ENCODE measurements at regions of chr6 and their contacts with region 1.

Region 1: GRCh38 chr6:99613409-99613704 is 6.7 kb downstream of the PRDM13 start:
- DNase-seq: peak; percentile 72
- ATAC-seq: peak; percentile 64
- H3K4me3 ChIP-seq: peak overlapping the region in 4 of 5 experiments; percentile 23 to 68 (median 52)
- H3K4me3 Mint-ChIP-seq: peak overlapping the region; percentile 86
- H3K27ac ChIP-seq: no peak overlapping the region
- H3K27ac Mint-ChIP-seq: no peak overlapping the region
- H3K4me1 ChIP-seq: peaks cover 21 to 30% of the 10 kb centered on the region in 2 donors
- H3K4me1 Mint-ChIP-seq: peaks cover 9% of the 10 kb centered on the region
- H3K27me3 ChIP-seq: peaks cover 0 to 80% (median 73%) of the 10 kb centered on the region in 4 experiments
- H3K27me3 Mint-ChIP-seq: peaks cover 75% of the 10 kb centered on the region
- CTCF ChIP-seq: peak; percentile 50

Region 2: DNA sequence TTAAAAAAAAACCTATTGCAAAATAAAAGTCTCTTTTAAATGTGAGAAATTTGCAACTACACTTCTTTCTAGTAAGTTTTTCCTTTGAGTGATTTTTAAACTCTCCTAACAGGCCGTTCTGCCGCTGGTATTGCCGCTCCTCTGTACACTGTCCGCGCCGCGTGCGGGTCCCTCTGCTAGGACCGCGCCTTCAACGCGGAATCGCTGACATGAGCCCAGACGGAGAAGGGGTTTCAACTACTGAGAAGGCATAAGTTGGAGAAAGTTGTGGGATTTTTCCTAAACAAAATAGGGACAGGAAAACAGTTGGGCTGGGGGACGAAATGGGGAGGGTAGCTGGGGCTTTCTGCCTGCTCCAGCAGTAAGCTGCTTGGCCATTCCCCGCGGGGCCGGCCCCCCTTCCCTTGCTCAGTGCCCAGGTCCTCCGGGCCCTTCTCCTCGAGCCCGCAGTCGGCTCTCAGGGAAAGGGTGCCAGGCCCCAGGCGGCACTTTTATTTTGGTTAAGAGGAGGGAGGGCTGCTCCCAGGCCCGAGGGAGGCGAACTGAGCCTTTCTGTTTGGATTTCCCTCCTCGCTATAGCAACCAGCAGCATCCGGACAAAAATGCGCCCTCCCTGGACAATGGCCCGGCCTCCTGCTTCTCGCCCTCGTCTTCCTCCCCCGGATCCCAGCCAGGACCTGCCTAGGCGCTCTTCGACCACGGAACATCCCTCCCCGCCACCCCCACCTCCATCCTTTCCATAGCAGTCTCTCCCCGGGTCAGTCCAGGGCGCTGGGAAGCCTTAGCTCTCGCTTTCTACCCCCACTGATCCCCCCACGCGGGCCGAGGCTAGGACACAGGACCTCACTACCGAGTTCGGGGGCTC is 785.8 kb before region 1 on chr6:
- CTCF ChIA-PET with region 1: no interaction called
- POLR2A ChIA-PET with region 1: no interaction called
- intact Hi-C with region 1: loop called (anchors 5 kb)
- DNase-seq: peak; percentile 17
- ATAC-seq: no peak
- H3K4me3 ChIP-seq: no peak overlapping the region
- H3K4me3 Mint-ChIP-seq: no peak overlapping the region
- H3K27ac ChIP-seq: no peak overlapping the region
- H3K27ac Mint-ChIP-seq: no peak overlapping the region
- H3K4me1 ChIP-seq: peaks cover 30 to 55% of the 10 kb centered on the region in 2 donors
- H3K4me1 Mint-ChIP-seq: peaks cover 37% of the 10 kb centered on the region
- H3K27me3 ChIP-seq: peaks cover 5 to 91% (median 79%) of the 10 kb centered on the region in 4 experiments
- H3K27me3 Mint-ChIP-seq: peaks cover 73% of the 10 kb centered on the region
- CTCF ChIP-seq: no peak

Region 3: GRCh38 chr6:99520855-99521632 is 92.3 kb before region 1 on chr6:
- CTCF ChIA-PET with region 1: interaction called, 3 read pairs
- POLR2A ChIA-PET with region 1: no interaction called
- intact Hi-C with region 1: loop called (anchors 2 kb)
- DNase-seq: peak; percentile 79
- ATAC-seq: peak; percentile 86
- H3K4me3 ChIP-seq: peak overlapping the region; percentile 77 to 97 (median 79)
- H3K4me3 Mint-ChIP-seq: peak overlapping the region; percentile 99
- H3K27ac ChIP-seq: peak overlapping the region; percentile 54 to 62
- H3K27ac Mint-ChIP-seq: peak overlapping the region; percentile 98
- H3K4me1 ChIP-seq: peaks cover 11 to 15% of the 10 kb centered on the region in 2 donors
- H3K4me1 Mint-ChIP-seq: peaks cover 39% of the 10 kb centered on the region
- H3K27me3 ChIP-seq: no peaks in the 10 kb centered on the region
- H3K27me3 Mint-ChIP-seq: no peaks in the 10 kb centered on the region
- CTCF ChIP-seq: peak; percentile 96

Region 4: DNA sequence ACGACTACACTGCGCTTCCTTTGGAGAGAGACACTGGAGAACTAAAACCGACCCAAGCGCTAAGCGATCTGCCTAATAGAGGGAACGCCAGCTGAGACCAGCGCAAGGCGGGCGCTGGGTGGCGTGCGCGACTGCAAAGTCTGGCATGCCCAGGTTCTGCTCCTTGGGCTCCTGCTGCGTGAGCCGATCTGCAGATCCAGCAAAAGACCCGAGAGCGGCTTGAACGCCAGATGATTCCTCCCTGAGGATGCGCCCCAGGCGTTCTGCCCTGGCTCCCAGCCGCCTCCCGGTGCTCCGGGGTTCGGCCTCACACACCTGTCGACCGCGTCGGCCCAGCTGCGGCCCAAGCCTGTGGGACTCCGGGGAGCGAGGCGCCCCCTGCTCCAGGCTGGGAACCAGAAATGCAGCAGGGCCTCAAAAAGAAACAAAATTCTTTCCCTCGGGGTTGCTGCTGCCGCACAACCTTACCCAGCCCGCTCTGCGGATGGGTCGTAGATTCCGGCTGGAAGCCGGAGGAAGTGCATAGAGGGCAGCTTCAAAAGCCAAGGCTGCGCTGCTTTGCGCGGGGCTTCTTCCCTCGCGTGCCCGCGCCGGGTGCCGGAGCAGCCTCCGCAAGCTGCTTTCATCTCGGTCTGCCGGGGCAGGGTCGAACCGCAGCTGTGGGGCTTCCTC is 24.6 kb before region 1 on chr6:
- CTCF ChIA-PET with region 1: interaction called, 8 read pairs
- POLR2A ChIA-PET with region 1: no interaction called
- intact Hi-C with region 1: loop called (anchors 2 kb)
- DNase-seq: peak; percentile 76
- ATAC-seq: peak; percentile 76
- H3K4me3 ChIP-seq: peak overlapping the region; percentile 39 to 76 (median 58)
- H3K4me3 Mint-ChIP-seq: peak overlapping the region; percentile 92
- H3K27ac ChIP-seq: no peak overlapping the region
- H3K27ac Mint-ChIP-seq: peak overlapping the region; percentile 70
- H3K4me1 ChIP-seq: peaks cover 29 to 33% of the 10 kb centered on the region in 2 donors
- H3K4me1 Mint-ChIP-seq: peaks cover 30% of the 10 kb centered on the region
- H3K27me3 ChIP-seq: peaks cover 5 to 55% (median 47%) of the 10 kb centered on the region in 4 experiments
- H3K27me3 Mint-ChIP-seq: peaks cover 57% of the 10 kb centered on the region
- CTCF ChIP-seq: peak; percentile 29

Region 5: GRCh38 chr6:100455230-100456124 is 842.1 kb after region 1 on chr6:
- CTCF ChIA-PET with region 1: no interaction called
- POLR2A ChIA-PET with region 1: no interaction called
- intact Hi-C with region 1: loop called (anchors 5 kb)
- DNase-seq: peak; percentile 37
- ATAC-seq: no peak
- H3K4me3 ChIP-seq: no peak overlapping the region
- H3K4me3 Mint-ChIP-seq: no peak overlapping the region
- H3K27ac ChIP-seq: no peak overlapping the region
- H3K27ac Mint-ChIP-seq: no peak overlapping the region
- H3K4me1 ChIP-seq: peaks cover 4 to 20% of the 10 kb centered on the region in 2 donors
- H3K4me1 Mint-ChIP-seq: no peaks in the 10 kb centered on the region
- H3K27me3 ChIP-seq: peaks cover 0 to 92% (median 74%) of the 10 kb centered on the region in 4 experiments
- H3K27me3 Mint-ChIP-seq: peaks cover 55% of the 10 kb centered on the region
- CTCF ChIP-seq: no peak

Measured in B cell (primary cell).